ENCODE measurements at regions of chr7 and their contacts with region 1.

Region 1: GRCh38 chr7:151626422-151627115 is 106.9 kb upstream of the RHEB start:
- DNase-seq: peak; percentile 66
- ATAC-seq: peak; percentile 71
- H3K4me3 ChIP-seq: no peak overlapping the region
- H3K27ac ChIP-seq: no peak overlapping the region
- H3K4me1 ChIP-seq: peaks cover 21% of the 10 kb centered on the region
- H3K27me3 ChIP-seq: no peaks in the 10 kb centered on the region
- CTCF ChIP-seq: peak; percentile 76

Region 2: DNA sequence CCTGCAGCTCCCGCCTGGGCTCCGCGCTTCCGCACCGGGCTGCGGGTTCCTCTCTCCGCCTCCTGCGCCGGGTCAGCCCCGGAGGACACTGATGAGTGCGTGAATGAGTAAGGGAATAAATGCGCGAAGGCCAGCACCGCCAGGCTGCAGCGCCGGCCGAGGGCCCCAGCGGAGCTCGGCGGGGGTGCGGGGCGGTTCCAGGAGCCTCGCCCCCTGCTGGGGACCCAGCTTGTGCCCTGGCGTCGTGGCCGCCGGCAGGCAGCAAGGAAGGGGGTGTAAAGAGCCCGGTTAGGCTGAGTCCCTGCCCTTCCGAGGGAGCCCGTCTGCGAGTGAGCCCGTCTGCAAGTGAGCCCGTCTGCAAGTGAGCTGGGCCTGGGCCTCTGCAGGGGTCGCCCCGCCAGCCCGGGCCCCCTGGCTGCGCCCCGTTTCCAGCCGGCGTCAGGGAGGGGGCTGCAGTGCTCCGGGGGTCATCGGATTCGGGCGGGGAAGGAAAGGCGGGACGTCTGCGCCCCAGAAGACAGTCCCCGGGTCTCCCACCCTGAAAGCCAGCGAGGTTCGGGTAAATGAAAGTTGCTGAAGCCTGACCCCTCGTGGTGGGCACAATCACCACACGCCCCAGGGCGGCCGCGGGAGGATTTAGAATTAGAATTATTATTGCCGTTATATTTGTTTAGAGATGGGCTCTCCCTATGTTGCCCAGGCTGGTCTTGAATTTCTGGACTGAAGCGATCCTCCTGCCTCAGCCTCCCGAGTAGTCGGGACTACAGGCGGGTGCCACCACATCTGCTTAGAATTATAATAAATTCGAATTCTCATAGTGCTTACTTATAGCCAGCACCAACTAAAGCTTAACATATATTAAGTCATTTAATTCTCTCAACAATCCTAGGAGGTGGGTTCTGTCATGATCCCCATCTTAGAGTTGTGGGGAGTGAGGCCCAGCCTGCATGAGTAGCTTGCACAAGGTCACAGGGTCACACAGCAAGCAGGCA is 178.0 kb before region 1 on chr7:
- CTCF ChIA-PET with region 1: no interaction called
- POLR2A ChIA-PET with region 1: no interaction called
- intact Hi-C with region 1: no loop called
- DNase-seq: peak; percentile 66
- ATAC-seq: peak; percentile 88
- H3K4me3 ChIP-seq: peak overlapping the region; percentile 65
- H3K27ac ChIP-seq: no peak overlapping the region
- H3K4me1 ChIP-seq: no peaks in the 10 kb centered on the region
- H3K27me3 ChIP-seq: no peaks in the 10 kb centered on the region
- CTCF ChIP-seq: peak; percentile 75

Region 3: DNA sequence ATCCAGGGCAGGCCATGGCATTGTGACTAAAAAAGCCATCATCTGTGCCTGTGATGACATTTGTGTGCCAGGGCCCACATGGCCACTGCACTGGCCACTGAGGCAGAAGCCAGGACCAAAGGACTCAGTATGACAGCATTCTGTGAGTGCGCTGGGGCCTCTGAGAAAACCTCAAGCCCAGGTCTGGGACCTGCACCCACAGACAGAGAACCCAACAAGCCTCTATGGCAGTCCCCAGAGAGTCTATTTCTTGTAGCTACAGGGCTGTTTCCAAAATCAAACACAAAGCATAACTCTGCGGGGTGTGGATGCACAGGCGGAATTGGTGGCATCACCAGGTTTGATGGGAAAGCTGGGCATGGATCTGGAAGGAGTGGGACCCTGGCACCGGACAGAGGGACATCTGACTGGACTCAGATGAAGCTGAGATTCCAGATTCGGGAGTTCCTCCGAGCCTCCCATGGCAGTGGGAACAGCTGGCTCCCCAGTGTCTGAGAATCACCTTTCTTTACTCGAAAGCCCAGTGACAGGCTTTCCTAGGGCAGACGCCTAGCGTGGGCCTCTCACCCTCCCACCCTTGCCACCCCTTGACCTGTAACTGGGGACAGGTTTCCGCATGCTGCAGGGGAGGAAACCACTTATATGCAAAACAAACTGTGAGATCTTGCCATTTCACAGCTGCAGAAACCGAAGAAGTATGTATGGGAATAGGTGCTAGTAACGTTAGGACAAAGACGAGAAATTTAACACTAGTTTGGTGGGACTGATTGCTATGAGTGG is 36.3 kb before region 1 on chr7:
- CTCF ChIA-PET with region 1: no interaction called
- POLR2A ChIA-PET with region 1: no interaction called
- intact Hi-C with region 1: no loop called
- DNase-seq: no peak
- ATAC-seq: no peak
- H3K4me3 ChIP-seq: no peak overlapping the region
- H3K27ac ChIP-seq: no peak overlapping the region
- H3K4me1 ChIP-seq: peaks cover 22% of the 10 kb centered on the region
- H3K27me3 ChIP-seq: no peaks in the 10 kb centered on the region
- CTCF ChIP-seq: no peak

Region 4: DNA sequence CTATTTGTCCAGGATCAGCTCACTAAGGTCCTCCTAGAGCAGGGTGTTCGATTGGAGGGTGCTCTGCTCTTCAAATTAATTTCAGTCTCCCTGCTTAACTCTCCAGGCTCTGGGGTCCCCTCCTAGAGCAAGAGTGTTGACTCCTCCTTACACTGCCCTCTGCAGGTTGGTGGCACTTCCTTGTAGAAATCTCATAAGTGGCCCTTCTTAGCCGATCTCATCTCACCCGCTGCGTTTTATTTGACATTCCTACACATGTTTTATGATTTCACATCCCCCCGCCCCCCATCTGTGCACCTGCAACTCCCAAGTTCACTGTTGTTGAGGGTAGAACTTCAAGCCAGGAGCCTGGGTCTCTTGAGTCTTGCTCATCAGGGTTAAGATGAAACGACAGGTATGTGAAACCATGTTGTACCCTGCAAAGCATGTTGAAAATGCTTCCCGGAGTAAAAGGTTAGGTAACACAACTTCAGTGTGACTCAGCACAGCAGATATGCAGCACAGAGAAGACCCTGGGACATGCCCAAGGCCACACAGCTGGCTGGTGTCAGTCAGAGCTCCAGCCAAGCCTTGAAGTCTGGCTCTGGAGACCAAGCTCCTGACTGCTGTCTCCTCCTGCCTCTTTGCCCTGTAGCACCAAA is 79.2 kb after region 1 on chr7:
- CTCF ChIA-PET with region 1: no interaction called
- POLR2A ChIA-PET with region 1: no interaction called
- intact Hi-C with region 1: loop called (anchors 1 kb)
- DNase-seq: peak; percentile 56
- ATAC-seq: peak; percentile 86
- H3K4me3 ChIP-seq: peak overlapping the region; percentile 17; the same call in 1 of the 2 replicates
- H3K27ac ChIP-seq: no peak overlapping the region
- H3K4me1 ChIP-seq: peaks cover 9% of the 10 kb centered on the region; the same call in 1 of the 2 replicates
- H3K27me3 ChIP-seq: no peaks in the 10 kb centered on the region
- CTCF ChIP-seq: peak; percentile 80

Region 5: GRCh38 chr7:151754142-151754590 is 127.6 kb after region 1 on chr7:
- CTCF ChIA-PET with region 1: no interaction called
- POLR2A ChIA-PET with region 1: no interaction called
- intact Hi-C with region 1: loop called (anchors 1 kb)
- DNase-seq: peak; percentile 96
- ATAC-seq: peak; percentile 96
- H3K4me3 ChIP-seq: no peak overlapping the region
- H3K27ac ChIP-seq: no peak overlapping the region
- H3K4me1 ChIP-seq: peaks cover 23% of the 10 kb centered on the region
- H3K27me3 ChIP-seq: no peaks in the 10 kb centered on the region
- CTCF ChIP-seq: peak; percentile 96

Measured in PC-3 (cell line).